ENCODE measurements at regions of chr3 and their contacts with region 1.

Region 1: DNA sequence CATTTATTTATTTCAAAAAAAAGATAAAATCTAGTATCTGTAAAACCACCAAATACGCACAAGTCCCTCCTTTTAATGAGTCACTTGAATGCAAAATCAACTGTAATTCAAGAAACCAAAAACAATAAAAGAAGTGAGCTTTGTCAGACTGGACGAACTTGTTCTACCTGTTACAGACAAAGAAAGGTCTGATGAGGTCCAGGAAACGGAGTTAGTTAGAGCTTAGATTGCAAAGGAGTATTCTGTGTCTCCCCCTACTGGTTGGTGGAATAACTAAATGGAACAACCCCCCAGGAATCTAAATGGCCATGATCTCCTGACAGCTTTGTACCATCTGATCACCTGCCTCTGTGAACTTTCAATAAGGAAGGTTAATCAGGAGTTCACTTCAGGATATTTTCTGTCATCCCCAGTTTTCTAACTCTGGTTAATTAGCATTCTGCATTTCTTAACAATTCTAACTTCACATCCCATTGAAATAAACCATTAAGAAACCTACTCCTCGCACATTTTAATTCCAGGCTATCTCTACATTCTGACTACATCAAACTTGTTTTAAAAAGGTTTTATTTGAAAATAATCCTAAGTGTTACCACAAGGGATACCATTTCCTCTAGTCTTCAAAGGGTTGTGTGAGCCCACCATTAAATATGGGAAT is 333.0 kb upstream of the SATB1 start:
- DNase-seq: peak; percentile 92
- H3K4me3 ChIP-seq: no peak overlapping the region
- H3K27ac ChIP-seq: no peak overlapping the region
- H3K4me1 ChIP-seq: no peaks in the 10 kb centered on the region
- H3K27me3 ChIP-seq: no peaks in the 10 kb centered on the region
- CTCF ChIP-seq: peak; percentile 63 to 75

Region 2: GRCh38 chr3:17894434-17895060 is 863.6 kb before region 1 on chr3:
- CTCF ChIA-PET with region 1: no interaction called
- dilution Hi-C with region 1: no loop called
- in situ Hi-C with region 1: no loop called
- intact Hi-C with region 1: loop called (anchors 5 kb)
- DNase-seq: peak; percentile 47
- H3K4me3 ChIP-seq: no peak overlapping the region
- H3K27ac ChIP-seq: no peak overlapping the region
- H3K4me1 ChIP-seq: no peaks in the 10 kb centered on the region
- H3K27me3 ChIP-seq: no peaks in the 10 kb centered on the region
- CTCF ChIP-seq: peak; percentile 50 to 72

Region 3: GRCh38 chr3:17901893-17902292 is 856.3 kb before region 1 on chr3:
- CTCF ChIA-PET with region 1: no interaction called
- dilution Hi-C with region 1: no loop called
- in situ Hi-C with region 1: no loop called
- intact Hi-C with region 1: loop called (anchors 5 kb)
- DNase-seq: no peak
- H3K4me3 ChIP-seq: no peak overlapping the region
- H3K27ac ChIP-seq: no peak overlapping the region
- H3K4me1 ChIP-seq: no peaks in the 10 kb centered on the region
- H3K27me3 ChIP-seq: no peaks in the 10 kb centered on the region
- CTCF ChIP-seq: no peak

Region 4: GRCh38 chr3:18559331-18559842 is 198.8 kb before region 1 on chr3:
- CTCF ChIA-PET with region 1: no interaction called
- dilution Hi-C with region 1: no loop called
- in situ Hi-C with region 1: no loop called
- intact Hi-C with region 1: loop called (anchors 1 kb)
- DNase-seq: peak; percentile 47
- H3K4me3 ChIP-seq: no peak overlapping the region
- H3K27ac ChIP-seq: no peak overlapping the region
- H3K4me1 ChIP-seq: no peaks in the 10 kb centered on the region
- H3K27me3 ChIP-seq: peaks cover 2% of the 10 kb centered on the region
- CTCF ChIP-seq: peak; percentile 77 to 81

Region 5: GRCh38 chr3:18712713-18713576 is 45.2 kb before region 1 on chr3:
- CTCF ChIA-PET with region 1: no interaction called
- dilution Hi-C with region 1: loop called (anchors 5 kb)
- in situ Hi-C with region 1: no loop called
- intact Hi-C with region 1: no loop called
- DNase-seq: no peak
- H3K4me3 ChIP-seq: no peak overlapping the region
- H3K27ac ChIP-seq: no peak overlapping the region
- H3K4me1 ChIP-seq: no peaks in the 10 kb centered on the region
- H3K27me3 ChIP-seq: no peaks in the 10 kb centered on the region
- CTCF ChIP-seq: no peak

Measured in mammary epithelial cell (primary cell).